ENCODE measurements at regions of chr11 and their contacts with region 1.

Region 1: DNA sequence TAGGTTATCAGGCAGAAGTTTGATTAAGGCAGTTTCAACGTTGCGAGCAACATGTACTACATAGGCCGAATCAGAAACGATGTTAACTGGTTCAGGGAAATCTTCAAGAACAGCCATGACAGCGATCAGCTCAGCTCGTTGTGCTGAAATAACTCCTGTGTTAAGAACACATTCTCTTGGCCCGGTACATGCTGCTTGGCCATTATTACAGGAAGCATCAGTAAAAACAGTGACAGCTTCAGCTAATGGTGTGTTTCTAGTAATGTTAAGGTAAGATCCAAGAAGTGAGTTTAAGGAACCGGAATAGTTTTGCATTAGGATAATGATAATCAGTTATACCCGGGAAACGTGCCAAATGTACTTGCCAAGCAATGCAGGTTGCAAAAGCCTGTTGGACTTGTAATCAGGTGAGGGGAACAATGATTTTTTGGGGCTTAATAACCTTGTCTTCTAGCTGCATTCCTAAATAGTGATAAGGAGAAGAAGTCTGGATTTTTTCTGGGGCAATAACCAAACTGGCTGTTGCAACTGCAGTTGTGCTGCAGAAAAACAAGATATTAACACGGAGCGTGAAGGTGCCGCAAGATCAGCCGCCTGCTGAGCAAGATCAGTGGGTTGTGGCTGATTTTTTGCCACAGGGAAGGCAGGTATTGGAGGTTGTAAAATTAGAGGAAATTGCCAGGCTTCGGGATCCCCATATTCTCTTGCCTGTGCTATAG is 14.3 kb downstream of the OR52K1 start:
- DNase-seq: peak; percentile 4
- H3K4me3 Mint-ChIP-seq: no peak overlapping the region
- H3K27ac Mint-ChIP-seq: no peak overlapping the region
- H3K4me1 Mint-ChIP-seq: peaks cover 31% of the 10 kb centered on the region
- H3K27me3 Mint-ChIP-seq: peaks cover 73% of the 10 kb centered on the region
- CTCF ChIP-seq: no peak

Region 2: DNA sequence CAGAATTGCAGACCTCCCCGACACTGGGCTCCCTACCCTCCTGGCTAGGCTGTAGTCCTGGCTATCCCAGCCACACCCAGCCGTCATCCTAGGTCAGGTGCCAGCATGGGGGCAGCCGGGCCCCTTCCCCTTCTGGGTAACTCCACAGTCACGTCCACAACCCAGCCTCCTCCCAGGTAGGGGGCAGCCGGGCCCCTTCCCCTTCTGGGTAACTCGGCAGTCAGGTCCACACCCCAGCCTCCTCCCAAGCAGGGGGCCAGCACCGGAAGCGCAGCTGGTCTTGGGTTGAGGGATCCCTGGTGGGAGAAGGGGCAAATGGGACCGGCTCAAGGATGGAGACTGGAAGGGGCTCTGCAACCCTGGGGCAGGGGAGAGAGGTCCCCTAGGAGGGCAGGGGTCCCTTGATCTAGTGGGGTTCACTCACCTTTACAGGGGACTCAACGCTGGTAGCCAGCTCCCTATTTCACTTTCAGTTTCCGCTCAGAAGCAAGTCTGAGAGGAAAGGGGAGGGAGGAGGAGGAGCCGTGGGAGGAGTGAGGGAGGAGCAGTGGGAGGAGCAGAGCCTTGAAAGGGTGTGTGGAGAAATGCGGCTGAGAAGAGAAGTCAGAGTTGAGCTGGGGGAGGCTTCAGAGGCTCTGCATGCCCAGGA is 103.4 kb before region 1 on chr11 and contains the start of gene TRIM21:
- CTCF ChIA-PET with region 1: interaction called, 8 read pairs
- intact Hi-C with region 1: loop called (anchors 1 kb)
- DNase-seq: peak; percentile 86
- H3K4me3 Mint-ChIP-seq: peak within 1 kb of the TSS; percentile 87
- H3K27ac Mint-ChIP-seq: peak within 1 kb of the TSS; percentile 74
- H3K4me1 Mint-ChIP-seq: no peaks in the 10 kb centered on the region
- H3K27me3 Mint-ChIP-seq: peaks cover 11% of the 10 kb centered on the region
- CTCF ChIP-seq: no peak
- total RNA-seq, gene TRIM21: 19.1 and 30.2 TPM in 2 replicates

Region 3: GRCh38 chr11:4455419-4455818 is 41.3 kb before region 1 on chr11:
- CTCF ChIA-PET with region 1: no interaction called
- intact Hi-C with region 1: no loop called
- DNase-seq: no peak
- H3K4me3 Mint-ChIP-seq: no peak overlapping the region
- H3K27ac Mint-ChIP-seq: no peak overlapping the region
- H3K4me1 Mint-ChIP-seq: peaks cover 9% of the 10 kb centered on the region
- H3K27me3 Mint-ChIP-seq: peaks cover 26% of the 10 kb centered on the region
- CTCF ChIP-seq: no peak

Region 4: DNA sequence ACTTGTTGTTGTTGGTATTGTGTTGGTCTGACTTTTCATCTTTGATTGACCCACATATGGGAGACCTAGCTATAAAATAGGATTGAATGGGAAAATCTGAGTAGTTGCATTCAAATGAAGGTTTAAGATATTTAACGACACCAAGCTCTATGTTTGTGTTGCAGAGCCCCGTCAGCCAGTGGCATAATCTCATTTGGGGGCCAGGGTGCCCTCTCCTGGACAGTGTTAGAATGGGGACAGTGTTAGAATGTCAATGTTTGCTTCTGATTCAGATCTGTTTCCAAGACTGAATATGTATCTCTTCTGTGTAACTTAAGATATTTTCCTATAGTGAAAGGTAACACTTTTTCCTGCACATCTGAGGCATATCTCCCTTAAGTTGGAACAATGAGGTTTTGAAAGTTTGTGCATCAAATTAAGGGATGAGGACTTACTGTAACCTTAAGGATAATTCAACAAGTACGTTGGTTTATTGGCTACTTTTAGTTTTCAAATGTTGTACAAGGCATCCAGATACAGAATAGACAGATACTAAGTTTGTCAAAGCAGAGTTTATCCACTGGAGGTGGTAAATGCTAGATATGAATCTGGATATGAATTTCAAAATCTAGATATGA is 43.0 kb after region 1 on chr11:
- CTCF ChIA-PET with region 1: interaction called, 5 read pairs
- intact Hi-C with region 1: loop called (anchors 1 kb)
- DNase-seq: peak; percentile 73
- H3K4me3 Mint-ChIP-seq: no peak overlapping the region
- H3K27ac Mint-ChIP-seq: no peak overlapping the region
- H3K4me1 Mint-ChIP-seq: no peaks in the 10 kb centered on the region
- H3K27me3 Mint-ChIP-seq: peaks cover 43% of the 10 kb centered on the region
- CTCF ChIP-seq: peak; percentile 46

Region 5: GRCh38 chr11:4607781-4608666 is 111.3 kb after region 1 on chr11 and contains the start of gene TRIM68:
- CTCF ChIA-PET with region 1: no interaction called
- intact Hi-C with region 1: loop called (anchors 5 kb)
- DNase-seq: peak; percentile 96
- H3K4me3 Mint-ChIP-seq: peak within 1 kb of the TSS; percentile 88
- H3K27ac Mint-ChIP-seq: peak within 1 kb of the TSS; percentile 69
- H3K4me1 Mint-ChIP-seq: peaks cover 26% of the 10 kb centered on the region
- H3K27me3 Mint-ChIP-seq: no peaks in the 10 kb centered on the region
- CTCF ChIP-seq: no peak
- total RNA-seq, gene TRIM68: 12.7 and 14.5 TPM in 2 replicates